ENCODE measurements at regions of chr6 and their contacts with region 1.

Region 1: DNA sequence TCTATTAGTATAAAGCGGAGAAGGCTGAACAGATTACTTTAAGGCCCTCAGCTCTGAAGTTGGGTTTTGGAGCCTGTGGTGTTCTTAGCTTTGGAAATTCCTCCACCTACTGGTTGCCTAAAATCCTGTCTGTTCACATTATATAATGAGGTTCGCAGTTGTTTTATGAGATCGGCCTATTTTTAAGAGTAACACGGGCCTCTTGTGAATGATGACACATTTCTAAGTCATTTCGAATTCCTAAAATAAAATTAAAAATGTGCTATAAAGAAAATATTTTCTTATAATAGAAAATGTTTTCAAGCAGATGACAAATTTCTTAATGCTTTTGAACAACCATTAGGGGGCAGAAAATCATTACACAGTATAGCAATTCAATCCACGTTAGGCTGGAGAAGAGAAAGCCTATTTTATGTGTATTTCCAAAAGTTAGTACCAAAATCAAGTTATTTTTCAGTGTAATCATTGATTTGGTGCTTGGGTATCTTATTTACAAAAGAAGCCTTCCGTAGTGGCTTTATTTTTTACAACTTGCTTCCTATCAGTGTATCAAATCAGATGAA is 15.8 kb upstream of the FAM8A1 start:
- DNase-seq: peak; percentile 58
- H3K4me3 ChIP-seq: no peak overlapping the region
- H3K27ac ChIP-seq: no peak overlapping the region
- H3K4me1 ChIP-seq: peaks cover 6% of the 10 kb centered on the region
- H3K27me3 ChIP-seq: no peaks in the 10 kb centered on the region
- CTCF ChIP-seq: peak; percentile 64 to 67

Region 2: DNA sequence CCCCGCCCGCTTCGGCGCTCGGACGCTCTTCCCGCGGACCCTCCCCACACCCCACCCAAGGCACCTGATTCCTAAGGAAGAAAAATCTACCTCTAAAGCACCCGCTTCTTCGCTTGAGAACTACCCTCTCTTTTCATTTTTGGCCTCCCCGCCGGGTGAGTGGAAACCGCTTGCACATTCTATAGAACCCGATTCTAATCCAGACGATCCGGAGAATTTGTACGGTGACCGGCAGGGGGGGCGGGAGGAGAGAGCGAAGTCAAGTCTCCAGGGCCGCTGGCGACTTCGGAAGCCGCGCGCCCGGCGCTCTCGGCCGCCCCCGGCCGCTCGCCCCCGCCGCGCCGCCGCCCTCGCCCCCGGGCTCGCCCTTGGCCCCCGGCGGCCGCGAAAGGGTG is 303.2 kb before region 1 on chr6 and contains the start of gene RBM24:
- CTCF ChIA-PET with region 1: no interaction called
- dilution Hi-C with region 1: no loop called
- in situ Hi-C with region 1: no loop called
- intact Hi-C with region 1: loop called (anchors 2 kb)
- DNase-seq: peak; percentile 44
- H3K4me3 ChIP-seq: peak within 1 kb of the TSS; percentile 61 to 76 (median 64)
- H3K27ac ChIP-seq: no peak within 1 kb of the TSS
- H3K4me1 ChIP-seq: peaks cover 25% of the 10 kb centered on the region
- H3K27me3 ChIP-seq: no peaks in the 10 kb centered on the region
- CTCF ChIP-seq: peak; percentile 11 to 57
- total RNA-seq, gene RBM24: 0.49 to 4.7 TPM

Region 3: DNA sequence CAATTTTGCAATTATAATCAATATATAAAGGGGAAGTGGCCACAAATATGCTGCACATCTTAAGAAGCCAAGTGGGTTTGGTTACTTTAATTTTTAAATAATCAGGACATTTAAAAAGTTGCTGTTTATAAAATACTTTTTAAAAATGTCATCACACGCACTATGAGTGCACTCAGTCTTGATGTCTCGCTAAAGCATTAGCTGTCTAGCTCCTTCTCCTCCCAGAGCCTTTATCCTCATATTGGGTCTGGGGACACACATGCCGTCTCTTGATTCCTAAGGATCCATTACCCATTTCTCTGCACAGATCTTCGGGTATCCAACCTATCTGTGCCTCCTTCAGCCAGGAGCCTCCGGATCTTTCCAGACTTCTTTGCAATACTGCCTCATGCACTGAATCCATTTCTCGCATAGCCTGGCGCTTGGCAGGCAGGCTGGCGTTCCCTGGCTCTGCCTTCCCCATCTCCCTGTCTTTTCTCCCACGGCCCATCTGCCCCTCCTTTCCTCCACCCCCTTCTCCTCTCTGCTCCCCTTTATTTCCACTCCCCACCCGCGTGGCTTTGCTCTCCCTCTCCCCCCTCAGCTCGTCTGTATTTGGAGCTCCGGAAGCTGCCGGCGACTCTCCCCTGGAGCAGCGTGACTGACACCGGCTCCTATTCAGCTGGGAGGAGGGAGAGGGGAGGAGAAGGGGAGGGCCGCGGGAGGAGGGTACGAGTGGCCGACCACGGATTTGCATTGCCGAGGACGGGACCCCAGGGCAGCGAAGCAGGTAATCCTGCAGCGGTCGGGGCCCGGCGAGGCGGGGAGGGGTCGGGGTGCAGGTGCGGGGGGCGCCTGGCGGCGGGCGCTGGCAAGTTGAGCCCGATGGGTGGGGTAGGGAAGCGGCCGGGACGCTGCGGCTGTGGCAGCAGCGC is 191.1 kb before region 1 on chr6 and contains the start of gene CAP2:
- CTCF ChIA-PET with region 1: no interaction called
- dilution Hi-C with region 1: no loop called
- in situ Hi-C with region 1: no loop called
- intact Hi-C with region 1: loop called (anchors 5 kb)
- DNase-seq: peak; percentile 62
- H3K4me3 ChIP-seq: peak within 1 kb of the TSS; percentile 62 to 73 (median 71)
- H3K27ac ChIP-seq: peak within 1 kb of the TSS; percentile 55
- H3K4me1 ChIP-seq: peaks cover 14% of the 10 kb centered on the region
- H3K27me3 ChIP-seq: no peaks in the 10 kb centered on the region
- CTCF ChIP-seq: peak in 1 of 2 donors; percentile 11
- total RNA-seq, gene CAP2: 7.2 to 8.4 TPM

Region 4: DNA sequence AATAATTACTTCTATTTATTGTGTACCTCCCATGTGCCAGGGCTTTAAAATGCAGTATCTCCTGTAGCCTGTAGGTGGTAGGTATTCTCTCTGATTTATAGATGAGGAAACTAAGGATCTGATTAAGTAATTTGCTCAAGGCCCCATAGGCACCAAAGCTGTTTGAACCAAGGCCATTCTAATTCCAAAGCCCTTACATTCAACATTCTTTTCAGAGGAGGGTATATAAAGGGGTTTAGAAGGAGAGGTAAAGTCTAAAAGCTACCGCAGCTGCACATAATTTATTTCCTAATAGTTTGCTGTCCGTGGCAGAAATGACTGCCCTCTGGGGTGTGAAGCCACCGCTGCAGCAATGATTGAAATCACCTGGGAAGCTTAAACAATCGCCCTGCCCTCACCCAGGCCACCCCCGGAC is 79.3 kb before region 1 on chr6:
- CTCF ChIA-PET with region 1: no interaction called
- dilution Hi-C with region 1: no loop called
- in situ Hi-C with region 1: no loop called
- intact Hi-C with region 1: loop called (anchors 1 kb)
- DNase-seq: no peak
- H3K4me3 ChIP-seq: no peak overlapping the region
- H3K27ac ChIP-seq: no peak overlapping the region
- H3K4me1 ChIP-seq: no peaks in the 10 kb centered on the region
- H3K27me3 ChIP-seq: no peaks in the 10 kb centered on the region
- CTCF ChIP-seq: peak; percentile 30 to 42

Region 5: DNA sequence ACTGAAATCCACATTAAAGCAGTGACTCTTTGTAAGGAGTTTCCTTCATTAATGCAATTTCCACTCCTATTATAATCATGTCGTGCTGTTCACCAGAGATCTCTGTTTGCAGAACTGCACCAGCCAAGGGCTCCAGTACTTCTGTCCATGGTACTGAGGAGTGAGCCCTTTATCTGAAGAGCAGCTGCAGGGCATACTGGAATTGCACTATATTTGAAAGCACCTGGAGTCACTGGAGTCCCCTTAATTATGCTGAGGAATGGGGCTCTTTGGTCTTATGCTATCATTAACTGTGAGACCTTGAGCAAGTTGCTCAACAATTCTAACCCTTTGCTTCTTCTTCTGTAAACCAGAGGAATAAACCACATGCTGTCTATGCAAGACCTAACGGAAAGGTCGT is 184.1 kb after region 1 on chr6:
- CTCF ChIA-PET with region 1: no interaction called
- dilution Hi-C with region 1: no loop called
- in situ Hi-C with region 1: no loop called
- intact Hi-C with region 1: loop called (anchors 10 kb)
- DNase-seq: peak; percentile 14
- H3K4me3 ChIP-seq: no peak overlapping the region
- H3K27ac ChIP-seq: no peak overlapping the region
- H3K4me1 ChIP-seq: no peaks in the 10 kb centered on the region
- H3K27me3 ChIP-seq: no peaks in the 10 kb centered on the region
- CTCF ChIP-seq: no peak

Region 6: DNA sequence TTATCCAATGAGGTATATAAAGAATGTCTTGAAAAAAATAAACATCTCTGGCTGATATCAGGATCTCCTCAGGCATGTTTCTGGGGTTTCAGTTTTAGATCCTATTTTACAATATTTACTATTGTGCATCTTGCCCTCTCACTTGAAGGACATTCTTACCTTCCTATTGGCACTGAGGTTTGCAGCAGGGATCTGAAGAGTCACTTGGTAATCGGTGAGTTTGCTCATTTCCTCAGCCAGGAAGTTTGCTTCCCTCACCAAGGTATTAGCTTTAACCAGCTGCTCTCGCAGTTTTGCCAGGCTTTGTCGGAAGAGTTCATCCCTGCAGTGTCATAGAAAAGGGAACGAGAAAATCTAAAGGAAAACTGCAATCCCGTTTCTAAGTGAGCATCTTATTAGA is 224.3 kb after region 1 on chr6:
- CTCF ChIA-PET with region 1: interaction called, 18 read pairs
- dilution Hi-C with region 1: no loop called
- in situ Hi-C with region 1: no loop called
- intact Hi-C with region 1: loop called (anchors 2 kb)
- DNase-seq: no peak
- H3K4me3 ChIP-seq: no peak overlapping the region
- H3K27ac ChIP-seq: no peak overlapping the region
- H3K4me1 ChIP-seq: no peaks in the 10 kb centered on the region
- H3K27me3 ChIP-seq: no peaks in the 10 kb centered on the region
- CTCF ChIP-seq: no peak

Region 7: DNA sequence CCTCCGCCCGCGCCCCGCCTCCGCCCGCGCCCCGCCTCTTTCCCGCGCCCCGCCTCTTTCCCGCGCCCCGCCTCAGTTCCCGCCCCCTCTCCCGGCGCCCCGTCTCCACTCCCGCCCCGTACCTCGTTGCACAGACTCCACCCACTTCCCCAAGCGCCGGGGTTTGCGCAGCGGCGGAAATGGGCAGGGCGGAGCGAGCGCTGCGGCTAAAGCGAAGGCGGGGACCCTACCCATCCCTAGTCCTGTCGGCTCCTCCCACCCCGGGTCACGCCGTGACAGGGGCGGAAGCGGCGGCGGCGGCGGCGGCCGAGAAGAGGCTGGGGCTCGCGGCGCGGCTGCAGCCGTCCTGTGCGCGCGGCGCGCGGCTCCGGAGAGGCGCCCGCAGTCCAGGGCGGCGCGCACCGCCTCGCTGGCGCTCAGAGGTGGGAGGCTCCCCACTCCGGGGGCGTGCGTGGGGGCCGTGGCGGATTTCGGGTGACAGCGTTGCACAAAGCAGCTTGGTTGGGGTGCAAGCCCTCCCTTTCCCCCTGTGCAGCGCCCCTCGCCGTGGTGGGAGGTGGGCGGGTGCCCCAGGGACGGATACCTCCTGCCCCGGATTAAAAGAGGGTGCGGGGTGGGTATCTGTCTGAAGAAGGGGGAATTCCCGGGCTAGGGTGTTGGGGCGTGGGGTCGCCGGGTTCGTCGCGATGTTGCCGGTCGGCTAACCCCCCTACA is 571.0 kb after region 1 on chr6 and contains the start of gene KDM1B:
- CTCF ChIA-PET with region 1: no interaction called
- dilution Hi-C with region 1: no loop called
- in situ Hi-C with region 1: no loop called
- intact Hi-C with region 1: loop called (anchors 10 kb)
- DNase-seq: peak; percentile 98
- H3K4me3 ChIP-seq: peak within 1 kb of the TSS; percentile 97 to 99 (median 98)
- H3K27ac ChIP-seq: peak within 1 kb of the TSS; percentile 98
- H3K4me1 ChIP-seq: peaks cover 16% of the 10 kb centered on the region
- H3K27me3 ChIP-seq: no peaks in the 10 kb centered on the region
- CTCF ChIP-seq: no peak
- total RNA-seq, gene KDM1B: 19.5 to 25.1 TPM